Activated CD8-positive, alpha-beta T cell treated with anti-CD3 and anti-CD28 coated beads, Interleukin-2, amount 10 ng/mL, durations not matched to agents 7 days and 5 days (primary cell): ENCODE measurements at regions of chr14 and their contacts with region 1.

Region 1: DNA sequence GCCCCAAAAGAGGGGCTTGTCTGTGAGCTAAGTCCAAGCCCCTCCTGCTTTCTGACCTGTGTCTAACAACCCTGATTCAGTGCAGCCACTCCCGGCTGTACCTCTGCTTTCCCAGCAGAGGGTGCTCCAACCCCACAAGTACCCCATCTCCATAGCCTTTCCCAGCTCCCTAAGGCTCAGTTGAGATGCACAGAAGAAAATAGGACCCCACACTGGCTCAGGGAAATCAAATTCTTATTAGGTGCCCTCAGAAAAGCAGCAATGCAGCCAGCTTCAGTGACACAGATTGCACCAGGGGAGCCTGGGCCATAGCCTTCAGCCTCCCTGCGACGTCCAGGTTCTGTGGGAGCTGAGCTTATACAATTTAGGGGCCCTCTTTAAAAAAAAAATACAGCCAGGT is 49.9 kb downstream of the LRRC74A start:
- DNase-seq: peak; percentile 63
- ATAC-seq: peak; percentile 76
- H3K4me3 Mint-ChIP-seq: no peak overlapping the region
- H3K27ac Mint-ChIP-seq: no peak overlapping the region
- H3K4me1 Mint-ChIP-seq: peaks cover 2% of the 10 kb centered on the region
- H3K27me3 Mint-ChIP-seq: no peaks in the 10 kb centered on the region

Region 2: DNA sequence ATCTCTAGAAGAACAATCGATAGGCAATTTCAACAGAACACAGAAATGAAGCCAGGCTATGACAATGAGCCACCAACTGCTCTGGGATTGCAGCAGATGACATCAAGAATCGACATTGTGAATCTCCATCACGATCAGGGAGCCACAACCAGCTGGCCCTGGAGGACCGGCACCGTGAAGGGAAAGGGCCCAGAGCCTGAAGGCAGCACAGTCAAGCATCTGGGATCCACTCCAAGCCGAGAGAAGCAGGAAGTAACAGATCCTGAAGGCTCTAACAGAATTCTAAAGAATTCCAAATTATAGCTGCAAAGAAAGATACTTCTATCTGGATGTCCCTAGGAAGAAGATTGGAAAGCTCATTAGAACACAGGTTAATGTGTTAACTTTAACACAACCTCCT is 11.1 kb after region 1 on chr14:
- CTCF ChIA-PET with region 1: interaction called, 13 read pairs
- POLR2A ChIA-PET with region 1: no interaction called
- DNase-seq: no peak
- ATAC-seq: no peak
- H3K4me3 Mint-ChIP-seq: no peak overlapping the region
- H3K27ac Mint-ChIP-seq: no peak overlapping the region
- H3K4me1 Mint-ChIP-seq: peaks cover 18% of the 10 kb centered on the region
- H3K27me3 Mint-ChIP-seq: peaks cover 7% of the 10 kb centered on the region

Region 3: GRCh38 chr14:76941946-76942805 is 66.1 kb after region 1 on chr14:
- CTCF ChIA-PET with region 1: interaction called, 11 read pairs
- POLR2A ChIA-PET with region 1: no interaction called
- DNase-seq: no peak
- ATAC-seq: no peak
- H3K4me3 Mint-ChIP-seq: no peak overlapping the region
- H3K27ac Mint-ChIP-seq: peak overlapping the region; percentile 28
- H3K4me1 Mint-ChIP-seq: peaks cover 23% of the 10 kb centered on the region
- H3K27me3 Mint-ChIP-seq: no peaks in the 10 kb centered on the region

Region 4: DNA sequence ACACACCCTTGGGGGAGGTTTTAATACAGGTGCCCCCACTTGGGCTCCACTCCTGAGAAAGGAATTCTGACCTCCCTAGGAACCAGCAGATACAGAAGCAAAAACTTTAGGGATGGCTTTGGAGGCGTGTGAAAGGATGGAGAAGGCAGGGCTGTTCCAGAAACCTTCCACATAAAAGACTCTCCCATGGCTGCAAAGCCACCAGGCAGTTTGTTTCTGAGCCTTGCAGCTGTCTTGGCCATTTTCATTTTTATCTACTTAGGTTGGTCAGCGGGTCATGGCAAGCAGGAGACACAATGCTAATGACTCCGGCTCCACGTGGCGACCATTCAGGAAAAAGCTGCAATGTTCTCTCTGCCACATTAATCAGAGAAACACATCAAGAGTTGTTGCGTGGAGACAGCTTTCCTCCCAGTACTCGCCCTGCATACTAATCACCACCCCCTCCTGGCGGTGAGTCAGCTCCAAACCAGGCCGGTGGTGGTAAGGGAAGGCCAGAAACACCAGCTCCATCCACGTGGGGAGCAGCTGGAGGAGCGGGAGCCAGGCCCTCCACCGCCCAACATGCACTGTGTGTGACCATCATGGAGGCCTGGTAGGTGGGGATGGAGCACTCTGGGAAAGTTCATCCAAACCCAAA is 183.3 kb after region 1 on chr14:
- CTCF ChIA-PET with region 1: interaction called, 101 read pairs
- POLR2A ChIA-PET with region 1: interaction called, 3 read pairs
- DNase-seq: no peak
- ATAC-seq: no peak
- H3K4me3 Mint-ChIP-seq: no peak overlapping the region
- H3K27ac Mint-ChIP-seq: no peak overlapping the region
- H3K4me1 Mint-ChIP-seq: peaks cover 14% of the 10 kb centered on the region
- H3K27me3 Mint-ChIP-seq: peaks cover 2% of the 10 kb centered on the region

Region 5: GRCh38 chr14:77086017-77086736 is 210.1 kb after region 1 on chr14:
- CTCF ChIA-PET with region 1: interaction called, 23 read pairs
- POLR2A ChIA-PET with region 1: no interaction called
- DNase-seq: no peak
- ATAC-seq: peak; percentile 49
- H3K4me3 Mint-ChIP-seq: no peak overlapping the region
- H3K27ac Mint-ChIP-seq: no peak overlapping the region
- H3K4me1 Mint-ChIP-seq: peaks cover 4% of the 10 kb centered on the region
- H3K27me3 Mint-ChIP-seq: peaks cover 6% of the 10 kb centered on the region

Region 6: DNA sequence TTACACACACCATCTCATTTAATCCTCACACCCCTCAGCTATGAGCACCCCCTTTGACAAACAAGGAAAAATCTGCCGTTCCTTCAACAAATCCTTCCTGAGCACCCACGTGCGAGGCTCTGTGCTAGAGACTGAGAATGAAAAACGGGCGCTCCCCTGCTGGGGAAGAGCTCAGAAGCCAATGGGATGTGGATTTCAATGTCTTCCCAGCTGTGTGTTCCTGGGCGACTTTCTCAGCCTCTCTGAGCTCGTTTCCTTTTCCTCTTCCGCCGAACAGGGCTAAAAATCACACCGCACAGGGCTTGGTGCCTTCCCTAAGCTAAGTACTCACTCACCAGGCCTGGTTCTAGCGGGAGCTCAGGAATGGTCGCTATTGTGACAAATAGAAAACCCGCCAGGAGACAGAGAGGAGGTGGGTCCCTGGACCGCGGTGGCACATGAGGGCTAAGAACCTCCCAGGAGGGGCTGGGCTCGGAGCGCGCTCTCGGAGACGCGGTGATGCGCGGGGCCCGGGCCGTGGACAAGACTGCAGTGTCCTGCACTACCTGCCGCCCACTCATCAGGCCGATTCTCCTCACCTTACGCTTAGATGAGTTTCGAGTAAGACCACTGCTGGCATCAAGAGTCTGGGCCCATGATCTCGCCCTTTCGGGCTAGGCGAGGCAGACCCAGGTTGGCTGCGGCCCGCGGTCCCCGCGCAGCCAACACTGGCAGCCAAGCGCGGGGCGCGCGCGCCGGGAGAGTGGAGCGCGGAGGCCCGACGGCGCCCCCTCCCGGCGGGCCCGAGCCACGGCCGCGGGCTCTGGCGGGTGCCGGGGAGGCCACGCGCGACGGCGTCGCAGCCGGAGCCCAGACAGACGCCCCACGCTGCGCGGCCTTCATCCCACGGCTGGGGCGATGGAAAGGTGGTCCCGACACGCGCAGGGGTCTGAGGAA is 248.5 kb after region 1 on chr14:
- CTCF ChIA-PET with region 1: interaction called, 13 read pairs
- POLR2A ChIA-PET with region 1: no interaction called
- DNase-seq: peak; percentile 56
- ATAC-seq: peak; percentile 87
- H3K4me3 Mint-ChIP-seq: peak overlapping the region; percentile 70
- H3K27ac Mint-ChIP-seq: no peak overlapping the region
- H3K4me1 Mint-ChIP-seq: peaks cover 40% of the 10 kb centered on the region
- H3K27me3 Mint-ChIP-seq: peaks cover 47% of the 10 kb centered on the region